CD8-positive, alpha-beta memory T cell (primary cell): ENCODE measurements at regions of chr11 and their contacts with region 1.

Region 1: DNA sequence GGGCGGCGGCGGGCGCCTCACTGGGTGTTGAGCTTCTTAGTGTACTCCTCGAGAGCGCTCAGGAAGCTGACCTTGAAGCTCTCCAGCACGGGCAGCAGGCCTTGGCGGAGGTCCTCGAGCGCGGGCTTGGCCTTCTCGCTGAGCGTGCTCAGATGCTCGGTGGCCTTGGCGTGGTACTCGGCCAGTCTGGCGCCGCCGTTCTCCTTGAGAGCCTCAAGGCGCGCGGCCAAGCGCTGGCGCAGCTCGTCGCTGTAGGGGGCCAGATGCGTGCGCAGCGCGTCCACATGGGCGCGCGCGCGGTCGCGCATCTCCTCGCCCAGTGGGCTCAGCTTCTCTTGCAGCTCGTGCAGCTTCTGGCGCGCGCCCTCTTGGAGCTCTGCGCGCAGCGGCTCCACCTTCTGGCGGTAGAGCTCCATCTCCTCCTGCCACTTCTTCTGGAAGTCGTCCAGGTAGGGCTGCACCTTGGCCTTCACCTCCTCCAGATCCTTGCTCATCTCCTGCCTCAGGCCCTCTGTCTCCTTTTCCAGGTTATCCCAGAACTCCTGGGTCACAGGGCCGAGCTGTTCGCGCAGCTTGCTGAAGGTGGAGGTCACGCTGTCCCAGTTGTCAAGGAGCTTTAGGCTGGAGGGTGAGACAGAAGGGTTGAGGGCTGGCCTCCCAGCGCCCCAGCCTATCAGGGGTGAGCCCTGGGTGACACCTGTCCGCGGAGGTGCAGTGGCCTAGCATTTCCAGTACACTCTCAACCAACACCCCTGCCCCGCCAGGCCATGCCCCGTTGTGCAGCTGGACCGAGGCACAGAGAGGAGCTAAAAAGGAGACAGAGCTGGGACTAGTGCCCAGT is 1.4 kb downstream of the APOA1 start:
- DNase-seq: peak; percentile 64 to 89 (median 79)
- H3K4me3 ChIP-seq: peak overlapping the region; percentile 78
- H3K4me3 Mint-ChIP-seq: peak overlapping the region; percentile 79 to 93 (median 82)
- H3K27ac ChIP-seq: peak overlapping the region; percentile 31
- H3K27ac Mint-ChIP-seq: peak overlapping the region; percentile 29 to 81 (median 61)
- H3K4me1 ChIP-seq: peaks cover 7% of the 10 kb centered on the region
- H3K4me1 Mint-ChIP-seq: peaks cover 5 to 28% (median 9%) of the 10 kb centered on the region in 3 donors
- H3K27me3 ChIP-seq: no peaks in the 10 kb centered on the region
- H3K27me3 Mint-ChIP-seq: peaks cover 0 to 1% of the 10 kb centered on the region in 2 donors

Region 2: DNA sequence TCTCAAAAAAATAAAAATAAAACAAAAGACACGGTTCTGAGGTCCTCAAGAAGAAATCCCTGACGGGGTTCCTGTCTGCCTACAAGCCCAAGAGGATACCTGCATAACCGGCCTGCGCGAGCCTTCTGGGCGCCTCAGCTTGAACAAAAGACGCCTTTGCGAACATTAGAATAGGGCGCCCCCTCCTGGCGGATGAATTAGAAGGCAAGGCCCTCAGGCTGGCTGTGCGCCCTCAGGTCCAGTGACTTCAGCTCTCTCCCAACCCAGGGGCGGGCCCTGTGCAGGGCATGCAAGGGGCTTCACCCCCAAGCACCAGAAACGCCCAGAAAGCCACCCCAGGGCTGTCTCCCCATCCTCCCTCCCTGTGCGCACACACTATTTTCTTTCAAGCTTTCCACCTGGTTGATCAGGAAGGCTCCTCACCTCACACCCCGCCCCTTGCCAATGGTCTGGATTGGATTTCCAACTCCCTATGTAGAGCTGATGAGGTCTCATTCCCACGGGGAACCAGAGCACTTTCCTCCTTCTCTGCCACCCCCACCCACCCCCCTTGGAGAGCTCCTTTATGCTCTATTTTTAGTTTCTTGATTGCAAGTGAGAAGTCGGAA is 336.5 kb before region 1 on chr11:
- CTCF ChIA-PET with region 1: no interaction called
- POLR2A ChIA-PET with region 1: no interaction called
- DNase-seq: peak in 1 of 5 donors; percentile 15
- H3K4me3 ChIP-seq: no peak overlapping the region
- H3K4me3 Mint-ChIP-seq: no peak overlapping the region
- H3K27ac ChIP-seq: no peak overlapping the region
- H3K27ac Mint-ChIP-seq: no peak overlapping the region
- H3K4me1 ChIP-seq: no peaks in the 10 kb centered on the region
- H3K4me1 Mint-ChIP-seq: no peaks in the 10 kb centered on the region
- H3K27me3 ChIP-seq: no peaks in the 10 kb centered on the region
- H3K27me3 Mint-ChIP-seq: peaks cover 35 to 53% of the 10 kb centered on the region in 2 donors

Region 3: DNA sequence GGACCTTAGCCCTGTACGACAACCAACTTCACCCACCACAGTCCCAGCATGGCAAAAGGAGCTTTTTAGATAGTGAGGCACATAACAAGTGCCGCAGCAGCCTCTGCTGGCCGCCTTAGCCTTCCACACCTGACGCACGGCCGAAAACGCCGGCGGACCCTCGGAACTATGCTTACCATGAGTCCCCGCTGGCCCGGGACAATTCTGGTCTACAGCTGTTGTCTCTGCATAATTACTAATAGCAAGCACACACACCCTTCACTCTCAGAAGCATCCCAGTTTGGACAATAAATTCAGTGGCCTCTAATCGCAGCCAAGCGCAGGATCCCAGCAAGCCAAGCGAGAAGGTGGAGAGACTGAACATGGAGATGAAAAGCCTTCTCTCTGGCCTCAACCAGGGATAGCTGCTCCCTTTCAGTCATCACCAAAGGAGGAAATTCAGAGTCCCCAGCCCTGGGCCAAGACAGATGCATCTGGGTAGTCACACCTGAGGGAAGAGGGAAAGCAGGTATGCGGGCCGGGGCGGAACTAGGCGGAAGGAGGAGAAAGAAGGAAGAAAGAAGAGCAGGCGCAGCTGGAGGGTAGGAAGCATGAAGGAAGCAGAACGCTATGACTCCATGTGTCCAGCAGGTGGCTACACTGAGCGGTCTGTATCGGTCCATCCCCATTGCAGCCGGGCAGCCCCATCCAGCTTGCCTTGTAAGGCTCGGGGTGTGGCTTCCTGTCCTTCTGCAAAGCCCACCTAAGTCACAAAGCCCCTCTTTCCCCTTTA is 103.6 kb before region 1 on chr11:
- CTCF ChIA-PET with region 1: interaction called, 19 read pairs
- POLR2A ChIA-PET with region 1: no interaction called
- DNase-seq: peak; percentile 29 to 64 (median 40)
- H3K4me3 ChIP-seq: no peak overlapping the region
- H3K4me3 Mint-ChIP-seq: peak overlapping the region in 1 of 7 donors; percentile 12
- H3K27ac ChIP-seq: no peak overlapping the region
- H3K27ac Mint-ChIP-seq: peak overlapping the region in 2 of 8 donors; percentile 58 to 77
- H3K4me1 ChIP-seq: peaks cover 3% of the 10 kb centered on the region
- H3K4me1 Mint-ChIP-seq: peaks cover 9 to 10% (median 10%) of the 10 kb centered on the region in 3 donors
- H3K27me3 ChIP-seq: no peaks in the 10 kb centered on the region
- H3K27me3 Mint-ChIP-seq: peaks cover 2 to 13% of the 10 kb centered on the region in 2 donors

Region 4: DNA sequence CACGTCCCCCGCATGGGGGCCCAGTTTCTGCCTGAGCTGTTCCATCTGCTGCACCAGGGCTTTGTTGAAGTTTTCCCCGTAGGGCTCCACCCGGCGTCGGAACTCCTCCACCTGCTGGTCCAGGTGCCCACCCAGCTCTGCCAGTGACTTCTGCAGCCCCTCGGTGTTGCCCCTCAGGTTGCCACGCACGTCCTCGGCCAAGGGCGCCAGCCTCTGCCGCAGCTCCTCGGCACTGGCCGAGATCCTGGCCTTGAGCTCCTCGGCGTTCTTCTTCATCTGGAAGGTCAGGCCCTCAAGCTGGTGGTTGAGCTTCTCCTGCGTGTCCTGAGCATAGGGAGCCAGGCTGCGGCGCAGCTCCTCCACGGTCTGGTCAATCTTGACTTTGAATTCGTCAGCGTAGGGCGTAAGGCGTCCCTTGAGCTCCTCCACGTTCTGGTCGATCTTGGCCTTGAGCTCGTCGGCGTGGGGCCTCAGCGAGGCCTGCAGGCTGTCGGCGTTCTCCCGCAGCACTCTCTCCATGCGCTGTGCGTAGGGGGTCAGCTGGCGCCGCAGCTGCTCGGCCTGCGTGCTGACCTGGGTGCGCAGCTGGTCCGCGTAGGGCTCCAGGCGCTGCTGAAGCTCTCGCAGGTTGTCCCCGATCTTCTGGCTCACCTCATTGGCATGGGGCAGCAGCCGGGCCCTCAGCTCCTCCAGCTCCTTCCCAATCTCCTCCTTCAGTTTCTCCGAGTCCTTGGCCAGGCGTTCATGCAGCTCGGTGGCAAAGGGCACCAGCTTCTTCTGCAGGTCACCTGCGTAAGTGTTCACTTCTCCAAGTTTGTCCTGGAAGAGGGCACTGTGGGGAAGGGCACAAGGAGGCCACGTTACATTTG is 14.7 kb before region 1 on chr11:
- CTCF ChIA-PET with region 1: interaction called, 21 read pairs
- POLR2A ChIA-PET with region 1: no interaction called
- DNase-seq: no peak
- H3K4me3 ChIP-seq: no peak overlapping the region
- H3K4me3 Mint-ChIP-seq: no peak overlapping the region
- H3K27ac ChIP-seq: no peak overlapping the region
- H3K27ac Mint-ChIP-seq: no peak overlapping the region
- H3K4me1 ChIP-seq: no peaks in the 10 kb centered on the region
- H3K4me1 Mint-ChIP-seq: no peaks in the 10 kb centered on the region
- H3K27me3 ChIP-seq: no peaks in the 10 kb centered on the region
- H3K27me3 Mint-ChIP-seq: no peaks in the 10 kb centered on the region

Region 5: GRCh38 chr11:116861539-116861938 is 25.5 kb after region 1 on chr11:
- CTCF ChIA-PET with region 1: interaction called, 13 read pairs
- POLR2A ChIA-PET with region 1: interaction called, 6 read pairs
- DNase-seq: no peak
- H3K4me3 ChIP-seq: no peak overlapping the region
- H3K4me3 Mint-ChIP-seq: no peak overlapping the region
- H3K27ac ChIP-seq: no peak overlapping the region
- H3K27ac Mint-ChIP-seq: peak overlapping the region in 3 of 8 donors; percentile 4 to 69 (median 44)
- H3K4me1 ChIP-seq: peaks cover 3% of the 10 kb centered on the region
- H3K4me1 Mint-ChIP-seq: peaks cover 8 to 12% (median 11%) of the 10 kb centered on the region in 3 donors
- H3K27me3 ChIP-seq: no peaks in the 10 kb centered on the region
- H3K27me3 Mint-ChIP-seq: no peaks in the 10 kb centered on the region

Region 6: GRCh38 chr11:116901964-116902688 is 66.1 kb after region 1 on chr11:
- CTCF ChIA-PET with region 1: interaction called, 10 read pairs
- POLR2A ChIA-PET with region 1: no interaction called
- DNase-seq: no peak
- H3K4me3 ChIP-seq: no peak overlapping the region
- H3K4me3 Mint-ChIP-seq: peak overlapping the region in 3 of 7 donors; percentile 11 to 45 (median 20)
- H3K27ac ChIP-seq: no peak overlapping the region
- H3K27ac Mint-ChIP-seq: peak overlapping the region in 7 of 8 donors; percentile 1 to 83 (median 39)
- H3K4me1 ChIP-seq: peaks cover 15% of the 10 kb centered on the region
- H3K4me1 Mint-ChIP-seq: peaks cover 43 to 52% (median 50%) of the 10 kb centered on the region in 3 donors
- H3K27me3 ChIP-seq: no peaks in the 10 kb centered on the region
- H3K27me3 Mint-ChIP-seq: peaks cover 0 to 4% of the 10 kb centered on the region in 2 donors

Region 7: DNA sequence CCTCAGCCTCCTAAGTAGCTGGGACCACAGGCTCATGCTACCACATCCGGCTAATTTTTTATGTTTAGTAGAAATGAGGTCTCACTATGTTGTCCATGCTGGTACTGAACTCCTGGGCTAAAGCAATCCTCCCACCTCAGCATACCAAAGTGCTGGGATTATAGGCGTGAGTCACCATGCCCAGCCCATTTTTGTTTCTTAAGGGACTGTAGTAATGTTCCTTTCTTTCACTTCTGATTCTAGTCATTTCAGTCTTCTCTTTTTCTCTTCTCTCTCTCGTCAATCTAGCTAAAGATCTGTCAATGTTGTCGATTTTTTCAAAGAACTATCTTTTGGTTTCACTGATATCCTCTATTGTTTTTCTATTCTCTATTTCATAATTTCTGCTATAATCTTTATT is 112.4 kb after region 1 on chr11:
- CTCF ChIA-PET with region 1: no interaction called
- POLR2A ChIA-PET with region 1: no interaction called
- DNase-seq: no peak
- H3K4me3 ChIP-seq: no peak overlapping the region
- H3K4me3 Mint-ChIP-seq: no peak overlapping the region
- H3K27ac ChIP-seq: no peak overlapping the region
- H3K27ac Mint-ChIP-seq: peak overlapping the region in 5 of 8 donors; percentile 56 to 83 (median 66)
- H3K4me1 ChIP-seq: peaks cover 11% of the 10 kb centered on the region
- H3K4me1 Mint-ChIP-seq: peaks cover 47 to 55% (median 52%) of the 10 kb centered on the region in 3 donors
- H3K27me3 ChIP-seq: no peaks in the 10 kb centered on the region
- H3K27me3 Mint-ChIP-seq: no peaks in the 10 kb centered on the region

Region 8: GRCh38 chr11:117107701-117108590 is 271.9 kb after region 1 on chr11:
- CTCF ChIA-PET with region 1: interaction called, 13 read pairs
- POLR2A ChIA-PET with region 1: no interaction called
- DNase-seq: no peak
- H3K4me3 ChIP-seq: no peak overlapping the region
- H3K4me3 Mint-ChIP-seq: no peak overlapping the region
- H3K27ac ChIP-seq: no peak overlapping the region
- H3K27ac Mint-ChIP-seq: no peak overlapping the region
- H3K4me1 ChIP-seq: no peaks in the 10 kb centered on the region
- H3K4me1 Mint-ChIP-seq: peaks cover 3 to 5% (median 4%) of the 10 kb centered on the region in 3 donors
- H3K27me3 ChIP-seq: no peaks in the 10 kb centered on the region
- H3K27me3 Mint-ChIP-seq: peaks cover 0 to 4% of the 10 kb centered on the region in 2 donors